Activated CD4-positive, alpha-beta memory T cell treated with anti-CD3 and anti-CD28 coated beads, Interleukin-2, amount 10 ng/mL, durations not matched to agents 7 days and 5 days (primary cell): ENCODE measurements at regions of chr10 and their contacts with region 1.

Region 1: GRCh38 chr10:6647811-6648526 is 67.9 kb upstream of the PRKCQ start:
- DNase-seq: peak; percentile 74
- H3K4me3 Mint-ChIP-seq: no peak overlapping the region
- H3K27ac Mint-ChIP-seq: no peak overlapping the region
- H3K4me1 Mint-ChIP-seq: peaks cover 44% of the 10 kb centered on the region
- H3K27me3 Mint-ChIP-seq: no peaks in the 10 kb centered on the region

Region 2: GRCh38 chr10:6445501-6446316 is 202.3 kb before region 1 on chr10:
- CTCF ChIA-PET with region 1: interaction called, 16 read pairs
- POLR2A ChIA-PET with region 1: no interaction called
- DNase-seq: peak; percentile 78
- H3K4me3 Mint-ChIP-seq: no peak overlapping the region
- H3K27ac Mint-ChIP-seq: peak overlapping the region; percentile 3
- H3K4me1 Mint-ChIP-seq: peaks cover 47% of the 10 kb centered on the region
- H3K27me3 Mint-ChIP-seq: no peaks in the 10 kb centered on the region

Region 3: GRCh38 chr10:6612371-6612770 is 35.6 kb before region 1 on chr10:
- CTCF ChIA-PET with region 1: interaction called, 12 read pairs
- POLR2A ChIA-PET with region 1: interaction called, 11 read pairs
- DNase-seq: no peak
- H3K4me3 Mint-ChIP-seq: no peak overlapping the region
- H3K27ac Mint-ChIP-seq: peak overlapping the region; percentile 61
- H3K4me1 Mint-ChIP-seq: peaks cover 88% of the 10 kb centered on the region
- H3K27me3 Mint-ChIP-seq: no peaks in the 10 kb centered on the region

Region 4: DNA sequence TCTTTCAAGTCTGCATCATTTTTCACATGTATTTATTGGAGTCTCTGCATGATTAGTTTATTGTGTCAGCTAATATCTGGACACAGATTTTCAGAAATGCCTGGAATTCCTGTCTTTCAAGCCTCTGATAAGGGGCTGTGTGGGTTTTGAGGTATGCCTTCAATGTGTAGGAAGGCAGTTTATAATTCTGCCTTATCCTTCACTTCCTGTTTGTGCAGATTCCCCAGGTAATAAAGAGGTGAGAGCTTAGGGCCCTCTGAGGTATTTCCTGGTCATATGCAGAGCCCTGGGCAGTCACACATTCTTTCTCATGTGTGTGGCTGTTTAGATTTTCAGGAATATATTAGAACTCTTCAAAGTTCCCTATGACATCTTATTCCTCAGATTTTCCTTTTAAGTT is 11.5 kb after region 1 on chr10:
- CTCF ChIA-PET with region 1: interaction called, 22 read pairs
- POLR2A ChIA-PET with region 1: interaction called, 3 read pairs
- DNase-seq: no peak
- H3K4me3 Mint-ChIP-seq: no peak overlapping the region
- H3K27ac Mint-ChIP-seq: no peak overlapping the region
- H3K4me1 Mint-ChIP-seq: peaks cover 6% of the 10 kb centered on the region
- H3K27me3 Mint-ChIP-seq: peaks cover 16% of the 10 kb centered on the region

Region 5: DNA sequence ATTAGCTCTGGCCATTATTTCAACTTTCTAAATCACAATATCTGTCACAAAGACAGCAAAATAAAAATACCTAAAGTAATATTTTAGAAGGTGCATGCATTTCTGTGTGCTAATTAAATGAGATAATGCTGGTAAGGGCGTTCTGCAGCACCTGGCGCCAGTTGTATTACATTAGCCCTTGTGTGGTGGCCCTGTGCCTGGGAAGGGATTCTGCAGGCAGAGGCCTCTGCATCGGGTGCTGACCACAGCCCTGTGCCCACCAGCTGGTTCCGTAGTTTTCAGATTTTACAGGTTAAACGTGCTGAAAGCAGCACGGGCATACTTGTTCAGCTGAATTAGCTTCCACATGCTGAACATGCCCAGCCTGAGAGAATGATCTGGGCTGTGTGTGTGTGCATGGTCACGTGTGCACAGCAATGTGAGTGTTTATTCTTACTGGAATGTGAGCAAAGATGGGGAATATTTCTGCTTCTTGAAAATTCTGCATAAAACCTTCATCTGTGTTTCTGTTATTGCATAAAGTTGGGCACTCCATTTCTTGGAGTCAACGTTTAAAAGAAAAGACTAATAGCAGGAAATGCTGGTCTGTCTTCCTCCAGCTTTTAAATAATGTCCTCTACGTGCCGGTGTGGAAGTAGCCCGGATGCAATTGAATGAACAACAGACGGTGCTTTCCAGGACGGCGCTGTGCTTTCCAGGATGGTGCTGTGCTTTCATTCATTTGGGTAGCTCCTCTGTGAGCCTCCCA is 90.0 kb after region 1 on chr10:
- CTCF ChIA-PET with region 1: no interaction called
- POLR2A ChIA-PET with region 1: no interaction called
- DNase-seq: no peak
- H3K4me3 Mint-ChIP-seq: no peak overlapping the region
- H3K27ac Mint-ChIP-seq: peak overlapping the region; percentile 3
- H3K4me1 Mint-ChIP-seq: peaks cover 4% of the 10 kb centered on the region
- H3K27me3 Mint-ChIP-seq: peaks cover 34% of the 10 kb centered on the region